ENCODE measurements at regions of chr2 and their contacts with region 1.

Region 1: DNA sequence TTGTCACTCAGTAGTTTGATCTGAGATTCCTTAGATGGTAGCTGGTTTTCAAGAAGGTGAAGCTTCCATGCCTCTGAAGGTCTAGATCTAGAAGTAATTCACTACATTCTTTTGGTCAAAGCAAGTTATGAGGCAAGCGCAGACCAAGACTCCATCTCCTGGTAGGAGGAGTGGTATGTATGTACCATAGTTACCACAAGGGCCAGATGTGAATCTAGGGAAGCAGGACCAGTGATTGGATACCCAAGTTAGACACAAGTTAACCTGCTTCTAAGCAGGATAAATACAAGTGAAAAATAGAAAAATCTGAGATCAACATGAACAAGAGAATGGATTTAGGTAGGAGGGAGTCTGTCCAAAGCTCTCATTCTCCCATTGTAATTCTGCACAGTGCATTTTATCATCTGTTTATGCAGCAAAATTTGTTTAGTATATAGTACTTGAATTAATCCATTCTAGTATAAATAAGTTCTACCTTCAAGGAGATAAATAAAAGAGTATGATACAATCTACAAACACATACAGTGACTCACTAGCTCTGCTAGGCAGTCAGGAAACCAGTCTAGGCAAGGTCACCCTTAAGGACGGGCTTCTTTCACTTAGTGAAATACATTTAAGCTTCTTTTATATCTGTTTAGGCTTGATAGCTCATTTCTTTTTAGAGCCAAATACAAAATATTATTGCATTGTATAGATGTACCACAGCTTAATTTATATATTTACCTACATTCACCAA is 14.2 kb upstream of the DOCK10 start:
- DNase-seq: peak; percentile 28
- H3K4me3 ChIP-seq: no peak overlapping the region
- H3K27ac ChIP-seq: no peak overlapping the region
- H3K4me1 ChIP-seq: peaks cover 4% of the 10 kb centered on the region
- H3K27me3 ChIP-seq: no peaks in the 10 kb centered on the region
- CTCF ChIP-seq: no peak
- POLR2A ChIP-seq: no peak

Region 2: GRCh38 chr2:225091336-225091735 is 34.8 kb after region 1 on chr2:
- CTCF ChIA-PET with region 1: no interaction called
- POLR2A ChIA-PET with region 1: no interaction called
- dilution Hi-C with region 1: no loop called
- intact Hi-C with region 1: loop called (anchors 2 kb)
- DNase-seq: no peak
- H3K4me3 ChIP-seq: no peak overlapping the region
- H3K27ac ChIP-seq: no peak overlapping the region
- H3K4me1 ChIP-seq: no peaks in the 10 kb centered on the region
- H3K27me3 ChIP-seq: peaks cover 0 to 2% of the 10 kb centered on the region in 2 experiments
- CTCF ChIP-seq: no peak
- POLR2A ChIP-seq: no peak